ENCODE measurements at regions of chr7 and their contacts with region 1.

Region 1: DNA sequence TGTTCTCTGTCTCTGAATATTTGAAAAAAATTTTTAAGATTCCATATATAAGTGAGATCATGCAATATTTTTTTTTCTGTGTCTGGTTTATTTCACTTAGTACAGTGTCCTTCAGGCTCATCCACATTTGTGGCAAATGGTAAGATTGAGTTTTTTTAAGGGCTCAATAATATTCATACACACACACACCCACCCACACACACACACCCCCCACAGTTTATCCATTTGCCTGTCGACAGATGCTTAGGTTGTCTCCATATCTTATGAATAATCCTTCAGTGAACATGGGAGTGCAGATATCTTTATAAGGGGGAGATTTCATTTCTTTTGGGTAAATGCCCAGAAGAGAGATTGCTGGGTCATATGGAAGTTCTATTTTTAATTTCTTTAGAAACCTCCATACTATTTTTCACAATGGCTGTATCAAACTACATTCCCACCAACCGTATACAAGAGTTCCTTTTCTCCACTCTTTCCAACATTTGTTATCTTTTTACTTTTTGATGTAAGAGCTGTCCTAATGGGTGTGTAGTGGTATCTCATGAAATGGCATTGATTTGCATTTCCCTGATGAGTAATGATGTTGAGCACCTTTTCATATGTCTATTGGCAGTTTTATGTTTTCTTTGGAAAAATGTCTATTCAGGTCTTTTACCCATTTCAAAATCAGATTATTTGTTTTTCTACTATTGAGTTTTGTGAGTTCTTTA is 35.0 kb downstream of the AUTS2 start:
- DNase-seq: no peak
- CTCF ChIP-seq: no peak

Region 2: DNA sequence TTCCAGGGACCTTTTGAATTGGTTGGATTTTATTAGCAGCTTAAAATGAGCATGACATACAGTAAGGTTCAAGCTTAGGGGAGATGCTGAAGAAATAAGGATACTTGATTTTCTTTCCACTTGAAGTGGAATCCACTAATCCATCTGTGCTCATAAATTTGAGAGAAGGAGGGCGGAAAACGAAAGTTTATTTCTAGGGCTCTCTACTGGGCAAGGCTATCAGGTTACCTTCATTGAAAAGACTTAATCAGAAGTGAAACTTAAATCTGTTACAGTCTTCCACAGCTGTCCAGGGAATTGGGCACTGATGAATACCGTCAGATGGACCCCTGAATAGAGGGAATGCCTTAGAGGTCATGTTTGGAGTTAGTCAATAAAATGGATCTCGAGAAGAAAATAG is 13.2 kb before region 1 on chr7:
- CTCF ChIA-PET with region 1: interaction called, 11 read pairs
- POLR2A ChIA-PET with region 1: no interaction called
- DNase-seq: no peak
- CTCF ChIP-seq: no peak

Measured in GM10248 (cell line).